ENCODE measurements at regions of chr4 and their contacts with region 1.

Region 1: GRCh38 chr4:55321707-55322264 is 24.3 kb upstream of the SRD5A3 start:
- DNase-seq: peak in 1 of 2 experiments; percentile 87
- H3K4me3 ChIP-seq: no peak overlapping the region
- H3K27ac ChIP-seq: no peak overlapping the region
- H3K4me1 ChIP-seq: peaks cover 0 to 6% (median 1%) of the 10 kb centered on the region in 4 experiments; a peak in 2 of 7 replicates
- H3K27me3 ChIP-seq: no peaks in the 10 kb centered on the region
- CTCF ChIP-seq: peak in 2 of 3 experiments; percentile 60 to 69; a peak in 2 of 4 replicates
- EP300 ChIP-seq: no peak
- POLR2A ChIP-seq: no peak
- RAD21 ChIP-seq: peak; percentile 90 to 92

Region 2: DNA sequence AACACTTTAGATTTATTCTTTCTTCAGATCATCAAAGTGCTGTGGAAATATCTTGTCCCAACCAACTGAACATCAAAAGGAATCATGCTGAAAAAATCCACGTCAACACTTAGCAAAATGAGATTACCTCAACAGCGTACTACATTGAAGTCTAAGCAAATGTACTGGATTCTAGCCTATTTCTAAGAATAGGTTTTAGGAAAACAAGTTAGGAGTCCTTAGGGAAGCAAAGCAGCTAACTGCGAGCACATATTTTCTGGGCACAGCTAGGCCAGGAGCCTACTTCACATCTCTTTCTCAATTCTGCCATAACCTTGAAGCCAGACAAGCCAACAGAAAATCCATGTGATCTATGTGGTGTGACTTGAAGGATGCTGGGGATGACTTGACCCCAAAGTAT is 218.6 kb before region 1 on chr4:
- CTCF ChIA-PET with region 1: interaction called, 10 read pairs
- POLR2A ChIA-PET with region 1: no interaction called
- DNase-seq: peak in 1 of 2 experiments; percentile 11
- H3K4me3 ChIP-seq: no peak overlapping the region
- H3K27ac ChIP-seq: no peak overlapping the region
- H3K4me1 ChIP-seq: no peaks in the 10 kb centered on the region
- H3K27me3 ChIP-seq: no peaks in the 10 kb centered on the region
- CTCF ChIP-seq: no peak
- EP300 ChIP-seq: no peak
- POLR2A ChIP-seq: no peak
- RAD21 ChIP-seq: no peak

Region 3: DNA sequence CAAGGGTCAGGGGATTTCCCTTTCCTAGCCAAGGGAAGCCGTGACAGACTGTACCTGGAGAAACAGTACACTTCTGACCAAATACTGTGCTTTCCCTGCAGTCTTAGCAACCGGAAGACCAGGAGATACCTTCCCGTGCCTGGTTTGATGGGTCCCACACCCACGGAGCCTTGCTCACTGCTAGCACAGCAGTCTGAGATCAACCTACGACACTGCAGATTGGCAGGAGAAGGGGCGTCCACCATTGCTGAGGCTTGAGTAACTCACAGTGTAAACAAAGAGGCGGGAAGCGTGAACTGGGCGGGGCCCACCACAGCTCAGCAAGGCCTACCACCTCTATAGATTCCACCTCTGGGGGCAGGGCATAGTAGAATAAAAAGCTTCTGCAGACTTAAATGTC is 24.4 kb before region 1 on chr4:
- CTCF ChIA-PET with region 1: no interaction called
- POLR2A ChIA-PET with region 1: no interaction called
- DNase-seq: no peak
- H3K4me3 ChIP-seq: no peak overlapping the region
- H3K27ac ChIP-seq: no peak overlapping the region
- H3K4me1 ChIP-seq: peaks cover 0 to 5% (median 0%) of the 10 kb centered on the region in 4 experiments; a peak in 2 of 7 replicates
- H3K27me3 ChIP-seq: no peaks in the 10 kb centered on the region
- CTCF ChIP-seq: no peak
- EP300 ChIP-seq: no peak
- POLR2A ChIP-seq: no peak
- RAD21 ChIP-seq: no peak

Measured in H1 (cell line).